Heart right ventricle (tissue), 16 donors: ENCODE measurements at regions of chr17 and their contacts with region 1.

Region 1: GRCh38 chr17:48444516-48445247 is 14.7 kb upstream of the SKAP1 start:
- DNase-seq: no peak
- ATAC-seq: no peak
- H3K4me3 ChIP-seq: no peak overlapping the region
- H3K27ac ChIP-seq: peak overlapping the region in 1 of 10 donors; percentile 26
- H3K4me1 ChIP-seq: peaks cover 0 to 39% (median 0%) of the 10 kb centered on the region in 9 donors
- H3K27me3 ChIP-seq: peaks cover 0 to 69% (median 37%) of the 10 kb centered on the region in 7 donors
- CTCF ChIP-seq: no peak

Region 2: DNA sequence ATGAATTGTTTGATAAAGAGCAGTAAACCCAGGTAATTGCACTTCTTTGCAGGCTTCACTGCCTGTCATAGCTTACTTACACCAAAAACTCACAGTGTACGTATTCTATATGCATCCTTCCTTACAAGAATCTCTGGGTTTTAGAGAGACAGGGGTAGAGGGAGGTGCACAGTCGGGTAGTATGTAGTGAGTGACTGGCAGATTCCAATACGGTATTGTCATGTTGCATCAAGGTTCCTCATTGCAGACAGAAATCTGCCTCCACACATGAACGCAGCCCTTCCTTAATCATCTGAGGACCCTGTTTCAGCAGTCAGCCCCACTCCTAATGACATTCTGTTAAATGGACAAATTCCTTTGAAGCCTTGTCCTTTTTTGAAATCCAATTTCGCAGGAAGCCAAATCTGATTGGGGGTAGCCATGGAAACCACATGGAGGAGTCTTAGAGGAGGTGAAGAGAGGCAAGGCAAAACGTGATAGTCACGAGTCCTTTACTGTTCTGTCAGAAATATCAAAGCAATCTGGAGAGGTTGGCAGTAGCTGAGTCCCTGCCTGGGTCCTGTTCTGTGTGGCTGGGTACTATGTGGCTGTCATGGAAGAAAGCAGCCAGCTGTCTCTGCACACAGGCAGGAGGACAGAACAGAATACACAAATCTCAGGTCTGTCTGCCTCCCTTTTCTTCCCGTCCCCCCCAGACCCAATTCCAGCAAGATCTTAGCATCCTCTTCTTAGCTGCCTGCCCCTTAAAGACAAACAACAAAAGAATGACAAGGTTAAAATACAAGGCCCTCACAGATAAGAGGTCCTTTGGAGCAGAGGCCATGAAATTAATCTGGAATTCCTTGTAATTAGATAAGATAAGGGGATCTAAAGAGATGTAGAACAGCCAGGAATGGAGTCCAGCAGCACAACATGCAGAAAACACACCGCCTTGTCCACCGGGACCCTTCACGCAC is 11.6 kb before region 1 on chr17:
- intact Hi-C with region 1: loop called in 1 of 10 experiments (anchors 1 kb)
- DNase-seq: no peak
- ATAC-seq: no peak
- H3K4me3 ChIP-seq: no peak overlapping the region
- H3K27ac ChIP-seq: no peak overlapping the region
- H3K4me1 ChIP-seq: peaks cover 0 to 3% (median 0%) of the 10 kb centered on the region in 9 donors
- H3K27me3 ChIP-seq: peaks cover 0 to 99% (median 94%) of the 10 kb centered on the region in 7 donors
- CTCF ChIP-seq: no peak

Region 3: DNA sequence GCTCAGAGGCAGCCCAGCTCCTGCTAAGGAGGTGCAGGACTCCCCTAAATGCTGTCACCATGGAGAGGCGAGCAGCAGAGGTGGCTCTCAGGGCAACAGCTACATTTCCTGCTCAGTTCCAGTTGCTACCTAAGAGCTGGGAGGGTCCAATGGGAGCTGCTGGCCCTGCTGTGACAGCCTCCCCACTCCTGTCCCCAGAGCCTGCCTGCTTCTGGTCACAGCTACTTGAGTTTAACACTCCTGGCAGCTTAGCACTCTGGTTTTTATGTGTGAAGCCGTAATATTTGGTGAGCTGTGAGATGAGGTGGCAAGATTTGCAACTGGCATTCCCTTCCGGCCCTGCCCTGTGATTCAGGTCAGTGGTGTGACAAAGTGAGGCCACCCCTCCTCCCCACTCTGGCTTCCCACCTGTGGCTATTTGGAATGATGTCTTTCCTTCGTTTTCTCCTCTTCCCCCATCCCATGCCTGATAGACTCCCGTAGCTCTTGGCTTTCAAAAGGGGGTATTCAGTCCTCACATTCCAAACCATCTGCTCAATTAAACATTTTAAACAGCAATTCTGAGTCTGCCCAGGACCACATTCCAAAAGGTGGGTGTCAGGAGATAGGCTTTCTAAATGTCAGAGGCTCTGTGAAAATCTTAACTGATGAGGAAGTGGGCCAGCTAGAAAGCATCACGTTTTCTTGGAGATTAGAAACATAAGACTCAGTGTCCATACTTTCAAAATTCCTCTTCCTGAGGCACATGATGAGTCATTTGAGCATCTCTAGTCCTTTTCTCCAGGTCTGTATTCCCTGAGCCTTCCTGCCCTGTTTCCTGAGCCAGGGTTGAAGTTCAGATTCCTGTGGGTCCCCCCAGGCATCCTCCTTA is 28.0 kb after region 1 on chr17:
- intact Hi-C with region 1: loop called in 1 of 10 experiments (anchors 1 kb)
- DNase-seq: no peak
- ATAC-seq: no peak
- H3K4me3 ChIP-seq: no peak overlapping the region
- H3K27ac ChIP-seq: no peak overlapping the region
- H3K4me1 ChIP-seq: no peaks in the 10 kb centered on the region
- H3K27me3 ChIP-seq: peaks cover 5 to 92% (median 75%) of the 10 kb centered on the region in 7 donors
- CTCF ChIP-seq: no peak